Transverse colon (tissue), 4 donors: ENCODE measurements at regions of chr12 and their contacts with region 1.

Region 1: GRCh38 chr12:65878544-65878943 is 54.3 kb downstream of the HMGA2 start:
- DNase-seq: no peak
- H3K4me3 ChIP-seq: no peak overlapping the region
- H3K27ac ChIP-seq: no peak overlapping the region
- H3K4me1 ChIP-seq: peaks cover 7 to 35% (median 14%) of the 10 kb centered on the region in 4 donors
- H3K27me3 ChIP-seq: no peaks in the 10 kb centered on the region
- CTCF ChIP-seq: no peak
- EP300 ChIP-seq: no peak
- POLR2A ChIP-seq: no peak

Region 2: GRCh38 chr12:66196806-66197205 is 318.3 kb after region 1 on chr12:
- in situ Hi-C with region 1: no loop called
- intact Hi-C with region 1: loop called (anchors 10 kb)
- DNase-seq: no peak
- H3K4me3 ChIP-seq: no peak overlapping the region
- H3K27ac ChIP-seq: no peak overlapping the region
- H3K4me1 ChIP-seq: peaks cover 0 to 4% (median 0%) of the 10 kb centered on the region in 4 donors
- H3K27me3 ChIP-seq: no peaks in the 10 kb centered on the region
- CTCF ChIP-seq: no peak
- EP300 ChIP-seq: no peak
- POLR2A ChIP-seq: no peak